ENCODE measurements at regions of chr14 and their contacts with region 1.

Region 1: DNA sequence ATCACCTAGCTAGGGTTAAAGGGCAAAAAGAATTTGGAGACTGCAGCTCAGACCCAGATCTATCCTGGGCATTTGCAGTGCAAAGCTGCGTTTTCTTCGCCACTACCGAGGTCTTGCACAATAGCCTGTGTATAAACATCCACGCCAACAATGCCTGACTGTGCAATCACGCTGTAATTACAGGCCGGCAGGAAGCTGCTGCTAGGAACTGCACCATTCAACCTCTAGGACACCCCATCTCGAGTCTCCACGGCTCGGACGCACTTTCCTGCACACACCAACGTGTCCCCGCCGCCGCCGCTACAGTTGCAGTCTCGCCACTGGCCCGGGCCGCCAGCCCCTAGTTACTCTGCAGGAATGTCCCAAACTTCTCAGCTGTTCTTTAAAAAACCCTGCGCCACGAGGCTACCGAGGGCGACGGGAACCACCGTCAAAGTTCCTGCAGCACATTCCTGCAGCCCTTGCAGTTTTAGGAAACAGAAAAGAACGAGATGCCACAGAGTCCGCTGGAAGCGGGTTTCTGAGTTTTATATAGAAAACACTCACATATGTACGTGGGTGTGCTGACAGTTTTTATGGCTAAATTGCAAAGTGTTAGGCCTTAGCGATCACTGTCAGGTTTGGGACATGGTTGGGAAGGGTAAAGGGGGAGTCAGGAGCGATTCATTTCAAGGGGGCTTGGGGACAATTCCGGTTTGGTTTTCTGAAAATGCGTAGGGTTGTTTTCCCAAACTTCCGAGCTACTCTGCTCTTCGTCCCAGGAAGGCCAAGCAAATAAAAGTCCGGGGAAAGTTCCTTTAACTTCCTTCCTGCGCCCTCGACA is 65.5 kb upstream of the PTGR2 start:
- DNase-seq: peak; percentile 96
- ATAC-seq: peak; percentile 59
- H3K4me3 ChIP-seq: peak overlapping the region; percentile 65
- H3K27ac ChIP-seq: peak overlapping the region; percentile 98
- H3K4me1 ChIP-seq: peaks cover 36% of the 10 kb centered on the region
- H3K27me3 ChIP-seq: no peaks in the 10 kb centered on the region
- CTCF ChIP-seq: peak; percentile 29; the same call in 1 of the 2 replicates
- POLR2A ChIP-seq: peak; percentile 73
- RAD21 ChIP-seq: 0 out of 2 replicates have a peak, but pooled peaks have one; percentile 9

Region 2: GRCh38 chr14:73728717-73729330 is 57.3 kb before region 1 on chr14:
- CTCF ChIA-PET with region 1: interaction called, 6 read pairs
- POLR2A ChIA-PET with region 1: no interaction called
- dilution Hi-C with region 1: no loop called
- in situ Hi-C with region 1: no loop called
- intact Hi-C with region 1: loop called (anchors 2 kb)
- DNase-seq: peak; percentile 63
- ATAC-seq: peak; percentile 45
- H3K4me3 ChIP-seq: no peak overlapping the region
- H3K27ac ChIP-seq: peak overlapping the region; percentile 35; the same call in 1 of the 2 replicates
- H3K4me1 ChIP-seq: peaks cover 29% of the 10 kb centered on the region
- H3K27me3 ChIP-seq: no peaks in the 10 kb centered on the region
- CTCF ChIP-seq: peak; percentile 84
- POLR2A ChIP-seq: no peak
- RAD21 ChIP-seq: peak; percentile 82

Region 3: GRCh38 chr14:73759714-73760597 is 26.1 kb before region 1 on chr14:
- CTCF ChIA-PET with region 1: interaction called, 5 read pairs
- POLR2A ChIA-PET with region 1: interaction called, 7 read pairs
- dilution Hi-C with region 1: no loop called
- in situ Hi-C with region 1: no loop called
- intact Hi-C with region 1: loop called (anchors 2 kb)
- DNase-seq: peak; percentile 99
- ATAC-seq: peak; percentile 85
- H3K4me3 ChIP-seq: peak overlapping the region; percentile 89
- H3K27ac ChIP-seq: peak overlapping the region; percentile 80
- H3K4me1 ChIP-seq: peaks cover 45% of the 10 kb centered on the region
- H3K27me3 ChIP-seq: no peaks in the 10 kb centered on the region
- CTCF ChIP-seq: no peak
- POLR2A ChIP-seq: peak; percentile 87
- RAD21 ChIP-seq: peak; percentile 35

Region 4: GRCh38 chr14:73851644-73852382 is 65.7 kb after region 1 on chr14 and contains the start of gene PTGR2:
- CTCF ChIA-PET with region 1: no interaction called
- POLR2A ChIA-PET with region 1: no interaction called
- dilution Hi-C with region 1: no loop called
- in situ Hi-C with region 1: no loop called
- intact Hi-C with region 1: loop called (anchors 1 kb)
- DNase-seq: peak; percentile 96
- ATAC-seq: peak; percentile 96
- H3K4me3 ChIP-seq: peak within 1 kb of the TSS; percentile 62
- H3K27ac ChIP-seq: peak within 1 kb of the TSS; percentile 88
- H3K4me1 ChIP-seq: no peaks in the 10 kb centered on the region; the same call in 1 of the 2 replicates
- H3K27me3 ChIP-seq: no peaks in the 10 kb centered on the region
- CTCF ChIP-seq: peak; percentile 12; the same call in 1 of the 2 replicates
- POLR2A ChIP-seq: peak; percentile 89
- RAD21 ChIP-seq: no peak
- total RNA-seq, gene PTGR2: 1.3 and 2.8 TPM in 2 replicates

Region 5: DNA sequence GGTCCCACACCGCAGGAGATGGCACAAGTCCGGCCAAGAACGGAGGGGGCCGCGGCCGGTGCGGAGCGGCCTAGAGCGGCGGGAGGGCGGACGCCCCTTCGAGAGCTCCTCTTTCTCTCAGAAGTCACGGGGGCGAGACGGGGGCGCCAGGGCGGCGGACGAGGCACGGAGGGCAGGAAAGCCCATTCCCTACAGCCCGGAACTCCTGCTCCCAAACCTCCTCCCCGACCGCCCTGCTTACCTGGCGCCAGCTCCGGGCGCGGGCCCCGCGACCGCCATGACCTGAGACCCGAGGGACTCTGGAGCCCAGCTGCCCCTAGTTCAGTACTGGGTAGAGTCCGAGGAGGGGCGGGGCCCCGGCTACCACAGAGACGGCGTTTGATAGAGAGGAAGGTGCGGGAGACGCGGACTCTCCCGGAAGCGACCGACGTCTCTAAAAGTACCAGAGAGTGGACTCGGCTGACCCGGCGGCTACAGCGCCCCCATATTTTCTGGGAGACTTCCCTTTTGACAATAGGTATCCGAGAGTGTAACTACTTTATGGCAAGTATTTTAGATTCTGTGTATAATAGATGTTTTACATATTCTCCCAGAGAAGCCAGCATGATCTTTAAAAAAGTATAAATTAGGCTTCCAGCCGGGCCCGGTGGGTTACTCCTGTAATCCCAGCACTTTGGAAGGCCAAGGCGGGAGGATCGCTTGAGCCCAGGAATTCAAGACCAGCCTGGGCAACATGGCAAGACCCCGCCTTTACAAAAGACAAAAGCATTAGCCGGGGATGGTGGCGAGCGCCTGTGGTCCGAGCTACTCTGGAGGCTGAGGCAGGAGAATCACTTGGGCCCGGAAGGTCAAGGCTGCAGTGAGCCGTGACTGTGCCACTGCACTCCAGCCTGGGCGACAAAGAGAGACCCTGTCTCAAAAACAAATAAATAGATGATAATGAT is 516.8 kb after region 1 on chr14 and contains the start of gene ABCD4:
- CTCF ChIA-PET with region 1: no interaction called
- POLR2A ChIA-PET with region 1: no interaction called
- dilution Hi-C with region 1: no loop called
- in situ Hi-C with region 1: no loop called
- intact Hi-C with region 1: loop called (anchors 5 kb)
- DNase-seq: peak; percentile 87
- ATAC-seq: peak; percentile 99
- H3K4me3 ChIP-seq: peak within 1 kb of the TSS; percentile 84
- H3K27ac ChIP-seq: peak within 1 kb of the TSS; percentile 76
- H3K4me1 ChIP-seq: peaks cover 3% of the 10 kb centered on the region
- H3K27me3 ChIP-seq: no peaks in the 10 kb centered on the region
- CTCF ChIP-seq: peak; percentile 59
- POLR2A ChIP-seq: peak; percentile 80
- RAD21 ChIP-seq: no peak
- total RNA-seq, gene ABCD4: 8.9 and 12.2 TPM in 2 replicates

Measured in IMR-90 (cell line).